Activated naive CD4-positive, alpha-beta T cell treated with anti-CD3 and anti-CD28 coated beads for 36 hours (primary cell): ENCODE measurements at regions of chrX and their contacts with region 1.

Region 1: GRCh38 chrX:101415180-101416145 is 7.4 kb downstream of the HNRNPH2 start:
- DNase-seq: peak; percentile 30
- H3K4me3 Mint-ChIP-seq: no peak overlapping the region
- H3K27ac Mint-ChIP-seq: peak overlapping the region; percentile 88
- H3K4me1 Mint-ChIP-seq: peaks cover 60% of the 10 kb centered on the region
- H3K27me3 Mint-ChIP-seq: no peaks in the 10 kb centered on the region

Region 2: DNA sequence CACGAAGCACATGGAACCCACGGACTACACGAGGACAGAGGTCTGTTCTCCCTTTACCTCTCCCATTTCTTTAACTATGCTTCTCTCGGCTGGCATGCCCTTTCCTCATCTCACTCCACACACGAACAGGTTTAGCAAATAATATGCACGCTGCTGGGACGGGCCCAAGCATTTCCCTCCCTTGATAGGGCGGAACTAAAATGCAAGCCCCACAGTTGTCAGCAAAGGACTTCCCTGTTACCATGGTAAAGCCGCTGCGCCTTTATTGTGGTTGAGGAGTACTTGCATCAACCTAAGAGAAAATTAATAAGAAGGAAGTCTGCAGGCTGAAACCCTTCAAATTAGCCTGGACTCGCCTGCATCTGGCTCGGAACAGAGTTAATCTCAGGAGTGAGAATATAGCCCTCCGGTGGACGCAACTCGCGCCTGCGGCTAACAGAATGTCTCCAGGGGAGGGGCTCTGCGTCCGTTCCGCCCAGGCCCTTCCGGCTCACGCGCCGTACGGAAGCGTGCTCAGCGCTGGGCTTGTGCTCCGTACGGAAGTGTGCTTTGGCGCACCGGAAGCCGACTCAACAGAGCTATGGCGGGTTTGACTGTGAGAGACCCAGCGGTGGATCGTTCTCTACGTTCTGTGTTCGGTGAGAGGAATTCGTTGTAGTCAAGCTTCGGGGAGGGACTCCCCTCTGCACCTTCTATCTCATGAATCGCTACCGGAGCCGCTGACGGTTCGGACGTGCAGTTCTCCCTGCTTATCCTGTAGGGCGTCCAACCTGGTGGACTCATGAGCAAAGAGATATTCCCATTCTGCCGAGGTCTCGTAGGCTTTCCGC is 595.4 kb before region 1 on chrX and contains the start of gene CSTF2:
- CTCF ChIA-PET with region 1: no interaction called
- intact Hi-C with region 1: no loop called
- DNase-seq: peak; percentile 84
- H3K4me3 Mint-ChIP-seq: peak within 1 kb of the TSS; percentile 90
- H3K27ac Mint-ChIP-seq: peak within 1 kb of the TSS; percentile 95
- H3K4me1 Mint-ChIP-seq: peaks cover 11% of the 10 kb centered on the region
- H3K27me3 Mint-ChIP-seq: no peaks in the 10 kb centered on the region
- total RNA-seq, gene CSTF2: 44.3 to 46.8 TPM

Region 3: GRCh38 chrX:101176439-101176838 is 239.0 kb before region 1 on chrX:
- CTCF ChIA-PET with region 1: no interaction called
- intact Hi-C with region 1: no loop called
- DNase-seq: no peak
- H3K4me3 Mint-ChIP-seq: no peak overlapping the region
- H3K27ac Mint-ChIP-seq: no peak overlapping the region
- H3K4me1 Mint-ChIP-seq: no peaks in the 10 kb centered on the region
- H3K27me3 Mint-ChIP-seq: no peaks in the 10 kb centered on the region

Region 4: DNA sequence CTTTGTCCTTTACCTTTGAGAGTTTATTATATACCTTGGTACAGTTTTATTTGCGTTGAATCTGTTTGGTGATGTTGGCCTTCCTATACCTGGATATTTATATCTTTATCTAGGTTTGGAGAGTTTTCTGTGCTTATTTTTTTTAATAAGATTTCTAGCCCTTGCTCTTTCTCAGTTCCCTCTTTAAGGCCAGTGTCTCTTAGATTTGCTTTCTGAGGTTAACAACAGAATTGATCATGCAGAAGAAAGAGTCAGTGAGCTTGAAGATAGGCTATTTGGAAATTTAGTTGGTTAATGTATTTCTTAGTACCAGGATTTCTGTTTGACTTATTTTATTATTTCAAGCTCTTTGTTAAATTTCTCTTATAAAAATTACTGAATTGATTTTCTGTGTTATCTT is 111.7 kb before region 1 on chrX:
- CTCF ChIA-PET with region 1: no interaction called
- intact Hi-C with region 1: no loop called
- DNase-seq: no peak
- H3K4me3 Mint-ChIP-seq: no peak overlapping the region
- H3K27ac Mint-ChIP-seq: no peak overlapping the region
- H3K4me1 Mint-ChIP-seq: no peaks in the 10 kb centered on the region
- H3K27me3 Mint-ChIP-seq: no peaks in the 10 kb centered on the region

Region 5: GRCh38 chrX:101485199-101485949 is 69.9 kb after region 1 on chrX and contains the start of gene ARMCX4:
- CTCF ChIA-PET with region 1: interaction called, 4 read pairs
- intact Hi-C with region 1: loop called (anchors 1 kb)
- DNase-seq: peak; percentile 52
- H3K4me3 Mint-ChIP-seq: peak within 1 kb of the TSS; percentile 76
- H3K27ac Mint-ChIP-seq: peak within 1 kb of the TSS; percentile 63
- H3K4me1 Mint-ChIP-seq: peaks cover 8% of the 10 kb centered on the region
- H3K27me3 Mint-ChIP-seq: no peaks in the 10 kb centered on the region
- total RNA-seq, gene ARMCX4: 5.5 to 6.1 TPM

Region 6: DNA sequence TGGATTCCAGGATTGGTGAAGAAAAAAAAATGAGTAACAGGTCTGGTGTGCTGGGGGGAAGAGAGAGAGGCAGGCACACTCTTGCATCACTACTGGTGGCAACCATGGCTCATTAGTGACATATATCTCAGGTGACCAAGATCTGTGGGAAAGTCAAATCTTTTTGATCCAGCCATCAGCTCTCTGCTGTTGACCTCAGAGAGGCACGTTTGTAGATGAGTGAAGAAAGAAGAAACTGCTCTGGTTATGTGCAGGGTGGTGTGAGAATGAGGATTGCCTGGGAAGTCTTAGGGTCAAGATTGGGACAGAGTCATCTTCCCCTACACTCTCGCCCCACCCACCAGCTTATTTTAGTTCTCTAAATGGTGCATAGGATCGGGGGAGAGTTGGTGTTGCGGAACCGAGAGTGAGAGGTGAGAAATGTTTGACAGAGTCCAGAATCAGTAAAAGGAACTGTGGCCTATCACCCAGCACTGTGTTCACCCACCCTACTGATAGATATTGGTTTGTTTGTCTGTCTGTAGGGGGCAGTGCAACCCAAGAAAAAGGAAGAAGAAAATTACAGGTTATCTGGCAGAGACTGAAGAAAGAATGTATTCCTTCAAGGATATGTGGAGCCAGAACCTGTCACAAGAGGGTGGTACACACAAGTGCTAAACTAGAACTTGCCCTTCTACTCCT is 180.4 kb after region 1 on chrX:
- CTCF ChIA-PET with region 1: interaction called, 3 read pairs
- intact Hi-C with region 1: loop called (anchors 5 kb)
- DNase-seq: peak; percentile 18
- H3K4me3 Mint-ChIP-seq: no peak overlapping the region
- H3K27ac Mint-ChIP-seq: no peak overlapping the region
- H3K4me1 Mint-ChIP-seq: no peaks in the 10 kb centered on the region
- H3K27me3 Mint-ChIP-seq: peaks cover 10% of the 10 kb centered on the region

Region 7: GRCh38 chrX:101759000-101759399 is 343.5 kb after region 1 on chrX:
- CTCF ChIA-PET with region 1: interaction called, 3 read pairs
- intact Hi-C with region 1: loop called (anchors 1 kb)
- DNase-seq: peak; percentile 31
- H3K4me3 Mint-ChIP-seq: no peak overlapping the region
- H3K27ac Mint-ChIP-seq: no peak overlapping the region
- H3K4me1 Mint-ChIP-seq: peaks cover 2% of the 10 kb centered on the region
- H3K27me3 Mint-ChIP-seq: no peaks in the 10 kb centered on the region

Region 8: GRCh38 chrX:102067966-102068708 is 652.7 kb after region 1 on chrX:
- CTCF ChIA-PET with region 1: no interaction called
- intact Hi-C with region 1: loop called (anchors 5 kb)
- DNase-seq: peak; percentile 25
- H3K4me3 Mint-ChIP-seq: no peak overlapping the region
- H3K27ac Mint-ChIP-seq: no peak overlapping the region
- H3K4me1 Mint-ChIP-seq: no peaks in the 10 kb centered on the region
- H3K27me3 Mint-ChIP-seq: peaks cover 4% of the 10 kb centered on the region

Region 9: DNA sequence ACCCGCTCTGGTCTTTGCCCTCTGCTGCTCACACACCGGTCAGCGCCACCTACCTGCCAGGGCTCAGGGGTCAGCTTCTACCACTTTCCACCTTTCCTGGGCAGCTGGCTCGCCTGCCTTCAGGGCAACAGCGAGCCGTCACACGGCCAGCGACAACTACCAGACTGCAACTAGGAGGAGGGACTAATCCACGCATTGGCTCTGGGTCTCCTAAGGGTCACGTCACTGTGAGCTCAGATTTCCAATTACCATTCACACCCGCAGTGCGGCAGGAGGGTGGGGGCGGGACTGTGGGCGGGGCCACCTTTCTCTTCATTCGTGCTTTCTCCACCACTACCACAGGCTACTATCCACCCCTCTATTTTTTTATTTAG is 740.3 kb after region 1 on chrX and contains the start of gene BEX5:
- CTCF ChIA-PET with region 1: no interaction called
- intact Hi-C with region 1: loop called (anchors 5 kb)
- DNase-seq: peak; percentile 73
- H3K4me3 Mint-ChIP-seq: peak within 1 kb of the TSS; percentile 98
- H3K27ac Mint-ChIP-seq: peak within 1 kb of the TSS; percentile 84
- H3K4me1 Mint-ChIP-seq: peaks cover 11% of the 10 kb centered on the region
- H3K27me3 Mint-ChIP-seq: peaks cover 3% of the 10 kb centered on the region
- total RNA-seq, gene BEX5: 6.6 to 7.2 TPM